Caco-2 (cell line): ENCODE measurements at regions of chr6 and their contacts with region 1.

Region 1: DNA sequence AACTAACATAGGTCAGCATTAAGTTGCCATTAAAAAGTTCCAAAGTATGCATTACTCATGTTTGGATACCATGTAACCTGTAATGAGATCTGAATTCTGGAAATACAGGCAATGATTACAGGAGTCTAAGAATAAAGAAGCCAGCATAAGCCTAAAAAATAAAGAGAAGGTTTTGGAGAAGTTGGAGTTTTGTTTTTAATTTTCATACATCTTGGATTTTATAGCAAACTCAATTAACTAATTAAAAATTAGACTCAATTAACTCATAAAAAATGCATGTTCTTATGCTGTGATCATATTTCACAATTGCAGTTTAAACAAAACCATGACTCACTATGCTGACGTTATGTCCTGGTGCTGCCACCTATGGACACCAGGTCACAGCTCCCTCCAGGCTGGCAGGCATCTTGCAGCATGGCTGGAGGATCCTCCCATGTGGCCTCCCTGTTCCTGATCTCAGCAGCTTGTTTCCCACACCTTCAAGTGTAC is 648.8 kb upstream of the AGPAT4 start:
- DNase-seq: peak; percentile 54 to 57
- H3K4me3 ChIP-seq: no peak overlapping the region
- H3K4me3 Mint-ChIP-seq: no peak overlapping the region
- H3K27ac Mint-ChIP-seq: no peak overlapping the region
- H3K4me1 ChIP-seq: no peaks in the 10 kb centered on the region
- H3K4me1 Mint-ChIP-seq: no peaks in the 10 kb centered on the region
- H3K27me3 ChIP-seq: no peaks in the 10 kb centered on the region
- H3K27me3 Mint-ChIP-seq: no peaks in the 10 kb centered on the region
- CTCF ChIP-seq: peak in 1 of 2 experiments; percentile 38

Region 2: DNA sequence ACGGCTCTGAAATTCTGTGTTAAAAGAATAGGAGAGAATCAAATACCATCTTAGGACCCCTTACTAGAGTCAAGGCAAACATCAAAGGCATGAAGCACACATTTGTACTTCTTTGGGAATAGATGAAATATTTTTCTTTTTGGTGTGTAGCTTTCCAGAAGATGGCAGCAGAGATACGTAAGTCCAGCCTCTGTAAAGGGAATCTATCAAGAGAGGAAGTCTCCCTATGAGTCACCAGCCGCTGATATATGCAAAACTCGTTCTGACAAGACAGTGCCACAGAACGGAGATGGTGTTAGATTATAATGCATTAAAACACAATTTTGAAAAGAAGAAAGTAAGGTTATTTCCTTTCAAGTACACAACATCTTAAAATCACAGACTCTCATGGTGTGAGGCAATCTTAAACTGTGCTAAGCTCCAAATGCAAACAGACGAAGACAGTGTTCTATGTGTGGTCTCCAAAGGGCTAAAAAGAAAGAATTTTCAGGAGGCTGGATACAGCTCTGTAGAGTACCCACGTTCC is 528.8 kb before region 1 on chr6:
- CTCF ChIA-PET with region 1: no interaction called
- POLR2A ChIA-PET with region 1: no interaction called
- intact Hi-C with region 1: loop called (anchors 10 kb)
- DNase-seq: peak in 1 of 2 experiments; percentile 55
- H3K4me3 ChIP-seq: no peak overlapping the region
- H3K4me3 Mint-ChIP-seq: no peak overlapping the region
- H3K27ac Mint-ChIP-seq: no peak overlapping the region
- H3K4me1 ChIP-seq: no peaks in the 10 kb centered on the region
- H3K4me1 Mint-ChIP-seq: no peaks in the 10 kb centered on the region
- H3K27me3 ChIP-seq: no peaks in the 10 kb centered on the region
- H3K27me3 Mint-ChIP-seq: peaks cover 8% of the 10 kb centered on the region
- CTCF ChIP-seq: peak; percentile 50 to 67

Region 3: GRCh38 chr6:161575523-161576254 is 347.0 kb before region 1 on chr6:
- CTCF ChIA-PET with region 1: no interaction called
- POLR2A ChIA-PET with region 1: no interaction called
- intact Hi-C with region 1: no loop called
- DNase-seq: no peak
- H3K4me3 ChIP-seq: no peak overlapping the region
- H3K4me3 Mint-ChIP-seq: no peak overlapping the region
- H3K27ac Mint-ChIP-seq: no peak overlapping the region
- H3K4me1 ChIP-seq: no peaks in the 10 kb centered on the region
- H3K4me1 Mint-ChIP-seq: no peaks in the 10 kb centered on the region
- H3K27me3 ChIP-seq: no peaks in the 10 kb centered on the region
- H3K27me3 Mint-ChIP-seq: peaks cover 8% of the 10 kb centered on the region
- CTCF ChIP-seq: no peak

Region 4: GRCh38 chr6:161748535-161749416 is 173.9 kb before region 1 on chr6:
- CTCF ChIA-PET with region 1: no interaction called
- POLR2A ChIA-PET with region 1: no interaction called
- intact Hi-C with region 1: loop called (anchors 1 kb)
- DNase-seq: peak in 1 of 2 experiments; percentile 56
- H3K4me3 ChIP-seq: no peak overlapping the region
- H3K4me3 Mint-ChIP-seq: no peak overlapping the region
- H3K27ac Mint-ChIP-seq: no peak overlapping the region
- H3K4me1 ChIP-seq: peaks cover 8% of the 10 kb centered on the region; the same call in 1 of the 2 replicates
- H3K4me1 Mint-ChIP-seq: no peaks in the 10 kb centered on the region
- H3K27me3 ChIP-seq: no peaks in the 10 kb centered on the region
- H3K27me3 Mint-ChIP-seq: peaks cover 3% of the 10 kb centered on the region
- CTCF ChIP-seq: peak; percentile 39 to 53

Region 5: GRCh38 chr6:162068340-162068739 is 145.7 kb after region 1 on chr6:
- CTCF ChIA-PET with region 1: no interaction called
- POLR2A ChIA-PET with region 1: no interaction called
- intact Hi-C with region 1: no loop called
- DNase-seq: no peak
- H3K4me3 ChIP-seq: no peak overlapping the region
- H3K4me3 Mint-ChIP-seq: no peak overlapping the region
- H3K27ac Mint-ChIP-seq: no peak overlapping the region
- H3K4me1 ChIP-seq: no peaks in the 10 kb centered on the region
- H3K4me1 Mint-ChIP-seq: no peaks in the 10 kb centered on the region
- H3K27me3 ChIP-seq: no peaks in the 10 kb centered on the region
- H3K27me3 Mint-ChIP-seq: no peaks in the 10 kb centered on the region
- CTCF ChIP-seq: no peak

Region 6: GRCh38 chr6:162343936-162344645 is 421.4 kb after region 1 on chr6:
- CTCF ChIA-PET with region 1: no interaction called
- POLR2A ChIA-PET with region 1: no interaction called
- intact Hi-C with region 1: no loop called
- DNase-seq: no peak
- H3K4me3 ChIP-seq: no peak overlapping the region
- H3K4me3 Mint-ChIP-seq: no peak overlapping the region
- H3K27ac Mint-ChIP-seq: no peak overlapping the region
- H3K4me1 ChIP-seq: no peaks in the 10 kb centered on the region
- H3K4me1 Mint-ChIP-seq: no peaks in the 10 kb centered on the region
- H3K27me3 ChIP-seq: no peaks in the 10 kb centered on the region
- H3K27me3 Mint-ChIP-seq: no peaks in the 10 kb centered on the region
- CTCF ChIP-seq: no peak